WTC11 (cell line): ENCODE measurements at regions of chr10 and their contacts with region 1.

Region 1: GRCh38 chr10:91908337-91909116 is 759 bp downstream of the FGFBP3 start:
- DNase-seq: peak; percentile 85
- ATAC-seq: peak; percentile 84
- H3K4me3 Mint-ChIP-seq: peak overlapping the region; percentile 92
- H3K27ac Mint-ChIP-seq: peak overlapping the region; percentile 92
- H3K4me1 Mint-ChIP-seq: peaks cover 29% of the 10 kb centered on the region
- H3K27me3 Mint-ChIP-seq: no peaks in the 10 kb centered on the region
- CTCF ChIP-seq: no peak

Region 2: DNA sequence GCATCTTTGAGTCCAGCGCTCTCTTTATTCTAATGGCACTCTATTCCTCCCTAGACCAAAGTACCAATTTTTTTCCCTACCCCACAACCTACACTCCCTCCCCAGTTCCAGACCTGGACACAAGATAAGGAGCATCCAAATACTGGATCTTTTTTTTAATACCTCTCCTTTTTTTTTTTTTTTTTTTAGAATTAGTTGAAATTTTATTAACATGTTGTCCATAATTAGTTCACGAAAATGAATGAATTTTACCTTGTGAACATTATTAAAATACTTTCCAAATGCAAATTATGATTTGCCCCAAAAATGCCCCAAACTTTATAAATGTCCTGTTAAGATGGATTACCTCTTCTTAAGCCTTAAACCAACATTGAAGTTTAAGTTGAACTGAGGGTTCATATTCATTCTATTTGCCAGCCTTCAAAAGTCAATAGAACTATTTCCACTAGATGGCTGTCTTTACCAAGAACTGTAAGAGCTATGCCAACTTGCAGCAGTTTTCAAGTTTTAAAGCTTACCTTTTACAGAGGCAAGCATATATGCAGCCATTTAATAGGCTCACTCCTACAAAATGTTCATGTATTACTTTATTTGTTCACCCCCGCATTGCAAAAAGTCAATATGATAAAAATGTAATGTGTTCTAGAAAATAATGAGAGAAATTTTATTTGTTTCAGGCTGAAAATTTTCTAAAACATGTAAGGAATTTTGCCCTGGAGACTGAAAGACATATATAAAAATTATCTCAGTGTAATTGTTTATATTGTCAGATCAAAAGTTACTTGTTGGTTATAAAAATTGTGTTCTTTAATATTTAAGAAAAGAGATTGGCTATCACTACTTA is 150.0 kb before region 1 on chr10:
- CTCF ChIA-PET with region 1: interaction called, 16 read pairs
- POLR2A ChIA-PET with region 1: no interaction called
- DNase-seq: no peak
- ATAC-seq: peak; percentile 79
- H3K4me3 Mint-ChIP-seq: no peak overlapping the region
- H3K27ac Mint-ChIP-seq: no peak overlapping the region
- H3K4me1 Mint-ChIP-seq: peaks cover 6% of the 10 kb centered on the region
- H3K27me3 Mint-ChIP-seq: no peaks in the 10 kb centered on the region
- CTCF ChIP-seq: no peak

Region 3: GRCh38 chr10:91856637-91857036 is 51.9 kb before region 1 on chr10:
- CTCF ChIA-PET with region 1: interaction called, 11 read pairs
- POLR2A ChIA-PET with region 1: no interaction called
- DNase-seq: no peak
- ATAC-seq: no peak
- H3K4me3 Mint-ChIP-seq: no peak overlapping the region
- H3K27ac Mint-ChIP-seq: peak overlapping the region; percentile 59
- H3K4me1 Mint-ChIP-seq: 0 out of 2 replicates have a peak, but pooled peaks cover 5% of the 10 kb centered on the region
- H3K27me3 Mint-ChIP-seq: no peaks in the 10 kb centered on the region
- CTCF ChIP-seq: no peak

Region 4: DNA sequence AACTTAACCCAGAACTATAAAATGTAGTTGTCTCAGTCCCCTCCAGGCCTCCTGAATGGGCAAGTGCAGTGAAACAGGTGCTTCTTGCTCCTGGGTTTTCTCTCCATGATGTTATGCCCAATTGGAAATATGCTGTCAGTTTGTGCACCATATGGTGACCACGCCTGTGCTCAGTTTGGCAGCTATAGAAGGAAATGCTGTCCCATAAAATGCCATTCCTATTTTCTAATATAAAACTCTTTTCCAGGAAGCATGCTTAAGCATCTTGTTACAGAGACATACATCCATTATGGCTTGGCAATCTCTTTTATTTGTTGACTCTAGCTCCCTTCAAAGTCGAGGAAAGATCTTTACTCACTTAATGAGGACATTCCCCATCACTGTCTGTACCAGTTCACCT is 44.4 kb before region 1 on chr10:
- CTCF ChIA-PET with region 1: interaction called, 14 read pairs
- POLR2A ChIA-PET with region 1: no interaction called
- DNase-seq: no peak
- ATAC-seq: no peak
- H3K4me3 Mint-ChIP-seq: no peak overlapping the region
- H3K27ac Mint-ChIP-seq: peak overlapping the region; percentile 62; the same call in 1 of the 2 replicates
- H3K4me1 Mint-ChIP-seq: peaks cover 31% of the 10 kb centered on the region
- H3K27me3 Mint-ChIP-seq: no peaks in the 10 kb centered on the region
- CTCF ChIP-seq: no peak

Region 5: DNA sequence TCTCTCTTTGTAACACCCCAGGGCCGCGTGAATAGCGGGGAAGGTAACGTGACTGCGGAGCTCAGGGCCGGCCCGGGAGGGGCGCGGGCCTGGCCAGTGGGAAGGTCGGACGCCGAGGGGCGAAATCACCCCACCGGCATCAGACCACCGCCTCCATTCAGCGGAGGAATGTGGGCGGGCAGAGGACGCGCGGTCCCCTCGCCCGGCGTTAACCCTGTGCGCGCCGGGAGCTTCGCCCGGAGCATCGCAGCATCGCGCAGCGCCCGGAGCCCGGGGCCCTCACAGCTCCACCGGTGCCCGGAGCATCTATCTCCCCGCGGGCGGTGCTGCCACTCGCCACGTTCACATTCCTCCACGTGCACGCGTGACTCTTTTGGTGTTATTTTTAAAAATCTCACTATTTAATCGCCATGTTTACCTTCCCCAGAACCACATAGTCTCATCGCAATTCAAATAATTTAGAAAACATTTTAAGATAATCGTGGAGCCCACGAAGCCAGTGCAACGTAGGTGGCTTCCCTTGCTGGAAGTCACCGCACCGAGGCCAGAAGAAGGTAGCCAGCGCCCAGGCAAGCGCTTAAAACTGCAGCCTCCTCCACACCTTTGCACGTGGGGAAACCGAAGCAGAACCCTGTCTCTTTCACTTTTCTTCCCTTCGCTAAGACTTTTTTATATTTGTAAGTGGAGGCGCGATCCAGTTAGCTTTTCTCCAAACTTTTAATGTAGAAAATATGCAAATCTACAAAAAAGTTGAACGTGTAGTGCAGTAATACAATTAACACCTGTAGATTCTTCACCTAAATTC is 21.1 kb before region 1 on chr10:
- CTCF ChIA-PET with region 1: interaction called, 12 read pairs
- POLR2A ChIA-PET with region 1: interaction called, 18 read pairs
- DNase-seq: peak; percentile 92
- ATAC-seq: peak; percentile 92
- H3K4me3 Mint-ChIP-seq: peak overlapping the region; percentile 66
- H3K27ac Mint-ChIP-seq: peak overlapping the region; percentile 99
- H3K4me1 Mint-ChIP-seq: peaks cover 61% of the 10 kb centered on the region
- H3K27me3 Mint-ChIP-seq: no peaks in the 10 kb centered on the region
- CTCF ChIP-seq: no peak

Region 6: GRCh38 chr10:91923371-91924211 is 15.1 kb after region 1 on chr10 and contains the start of gene BTAF1:
- CTCF ChIA-PET with region 1: interaction called, 11 read pairs
- POLR2A ChIA-PET with region 1: interaction called, 27 read pairs
- DNase-seq: peak; percentile 86
- ATAC-seq: peak; percentile 94
- H3K4me3 Mint-ChIP-seq: peak within 1 kb of the TSS; percentile 90
- H3K27ac Mint-ChIP-seq: peak within 1 kb of the TSS; percentile 97
- H3K4me1 Mint-ChIP-seq: peaks cover 27% of the 10 kb centered on the region
- H3K27me3 Mint-ChIP-seq: peaks cover 5% of the 10 kb centered on the region; the same call in 1 of the 2 replicates
- CTCF ChIP-seq: no peak
- total RNA-seq, gene BTAF1: 47.2 to 49.6 TPM (median 49.2 TPM) in 3 replicates